ENCODE measurements at regions of chr11 and their contacts with region 1.

Region 1: GRCh38 chr11:66842501-66842895 is 743 bp upstream of the RCE1 start:
- DNase-seq: no peak
- ATAC-seq: no peak; the same call in 1 of the 2 replicates
- H3K4me3 ChIP-seq: peak overlapping the region; percentile 82 to 99
- H3K27ac ChIP-seq: peak overlapping the region; percentile 95
- H3K4me1 ChIP-seq: peaks cover 35% of the 10 kb centered on the region
- H3K27me3 ChIP-seq: no peaks in the 10 kb centered on the region
- CTCF ChIP-seq: no peak

Region 2: DNA sequence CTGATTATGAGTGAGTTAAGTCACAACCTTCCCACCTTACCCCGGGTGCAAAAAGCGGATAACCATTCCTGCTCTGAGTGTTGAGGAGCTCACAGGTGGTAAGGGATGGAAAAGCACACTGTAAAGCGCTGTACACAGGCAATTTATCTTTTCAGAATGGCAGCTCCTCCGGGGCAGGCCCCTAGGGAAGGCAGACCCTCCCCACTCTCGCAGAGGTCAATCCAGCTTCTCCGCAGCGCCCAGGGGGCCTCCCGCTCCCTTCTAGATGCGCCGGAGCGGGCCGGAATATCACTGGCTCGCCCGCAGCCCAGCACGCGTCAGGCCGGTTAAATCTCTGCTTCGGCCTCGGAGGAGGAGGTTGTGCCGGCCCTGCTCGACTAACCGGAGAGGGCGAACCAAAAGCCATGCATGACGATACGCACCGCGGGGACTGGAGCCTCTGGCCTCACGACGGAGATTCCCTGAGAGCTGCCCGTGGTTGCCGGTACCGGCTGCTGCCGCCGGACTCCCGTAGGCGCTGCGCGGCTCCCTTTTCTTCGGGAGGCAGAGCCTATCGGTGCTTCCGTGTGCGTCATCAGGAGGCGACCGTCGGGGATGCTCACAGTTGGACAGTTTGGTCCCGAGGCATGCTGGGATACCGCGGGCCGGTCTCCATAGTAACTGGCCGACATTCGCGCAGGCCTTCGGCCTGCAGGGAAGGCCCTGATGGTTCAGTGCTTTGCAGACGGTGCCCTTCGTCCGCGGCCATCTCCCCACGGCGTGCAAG is 497.8 kb before region 1 on chr11 and contains the start of gene BRMS1:
- CTCF ChIA-PET with region 1: no interaction called
- POLR2A ChIA-PET with region 1: no interaction called
- in situ Hi-C with region 1: no loop called
- intact Hi-C with region 1: no loop called
- DNase-seq: peak; percentile 91
- ATAC-seq: peak; percentile 86
- H3K4me3 ChIP-seq: peak within 1 kb of the TSS; percentile 91 to 98
- H3K27ac ChIP-seq: peak within 1 kb of the TSS; percentile 94
- H3K4me1 ChIP-seq: peaks cover 24% of the 10 kb centered on the region
- H3K27me3 ChIP-seq: no peaks in the 10 kb centered on the region
- CTCF ChIP-seq: no peak
- total RNA-seq, gene BRMS1: 80.5 TPM

Region 3: DNA sequence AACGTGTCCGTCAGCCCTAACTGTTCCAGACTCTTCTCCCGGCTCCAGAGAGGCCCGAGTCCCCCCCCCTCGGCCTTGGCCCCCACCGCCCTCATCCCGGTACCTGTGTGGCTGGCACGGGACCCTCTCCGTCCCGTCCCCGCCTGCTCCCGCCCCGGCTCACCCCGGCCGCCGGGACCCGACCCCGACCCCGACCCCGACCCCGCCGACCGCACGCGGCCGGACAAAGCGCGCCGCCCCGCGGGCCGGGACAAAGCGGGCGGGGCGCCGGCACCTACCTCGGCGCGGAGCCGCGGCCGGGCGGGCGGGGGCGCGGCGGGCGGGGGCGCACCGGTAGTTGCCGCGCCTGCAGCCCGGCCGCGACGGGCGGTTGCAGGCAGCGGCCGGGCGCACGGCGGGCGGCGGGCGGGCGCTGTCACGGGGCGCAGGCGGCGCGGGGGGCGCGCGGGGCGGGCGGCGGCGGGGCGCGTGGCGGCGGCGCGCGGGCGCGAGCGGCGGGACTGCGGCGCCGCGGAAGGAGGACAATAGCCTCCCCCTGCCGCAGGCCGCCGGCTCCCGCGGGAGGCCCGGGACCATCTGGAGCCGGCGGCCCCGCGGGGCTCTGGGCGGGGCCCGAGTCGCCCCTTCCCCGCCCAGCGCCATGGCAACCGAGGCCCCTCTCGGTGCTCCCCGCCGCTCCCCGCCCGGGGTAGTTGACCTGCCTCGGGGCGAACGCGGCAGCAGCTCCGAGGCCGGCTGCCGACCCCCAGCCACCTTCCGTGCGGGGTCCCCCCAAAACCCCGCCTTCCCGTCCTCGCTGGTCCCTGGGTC is 114.4 kb before region 1 on chr11:
- CTCF ChIA-PET with region 1: no interaction called
- POLR2A ChIA-PET with region 1: interaction called, 10 read pairs
- in situ Hi-C with region 1: no loop called
- intact Hi-C with region 1: no loop called
- DNase-seq: no peak
- ATAC-seq: peak; percentile 58
- H3K4me3 ChIP-seq: peak overlapping the region; percentile 44 to 53
- H3K27ac ChIP-seq: no peak overlapping the region
- H3K4me1 ChIP-seq: peaks cover 6% of the 10 kb centered on the region; the same call in 1 of the 2 replicates
- H3K27me3 ChIP-seq: peaks cover 35% of the 10 kb centered on the region
- CTCF ChIP-seq: no peak

Region 4: DNA sequence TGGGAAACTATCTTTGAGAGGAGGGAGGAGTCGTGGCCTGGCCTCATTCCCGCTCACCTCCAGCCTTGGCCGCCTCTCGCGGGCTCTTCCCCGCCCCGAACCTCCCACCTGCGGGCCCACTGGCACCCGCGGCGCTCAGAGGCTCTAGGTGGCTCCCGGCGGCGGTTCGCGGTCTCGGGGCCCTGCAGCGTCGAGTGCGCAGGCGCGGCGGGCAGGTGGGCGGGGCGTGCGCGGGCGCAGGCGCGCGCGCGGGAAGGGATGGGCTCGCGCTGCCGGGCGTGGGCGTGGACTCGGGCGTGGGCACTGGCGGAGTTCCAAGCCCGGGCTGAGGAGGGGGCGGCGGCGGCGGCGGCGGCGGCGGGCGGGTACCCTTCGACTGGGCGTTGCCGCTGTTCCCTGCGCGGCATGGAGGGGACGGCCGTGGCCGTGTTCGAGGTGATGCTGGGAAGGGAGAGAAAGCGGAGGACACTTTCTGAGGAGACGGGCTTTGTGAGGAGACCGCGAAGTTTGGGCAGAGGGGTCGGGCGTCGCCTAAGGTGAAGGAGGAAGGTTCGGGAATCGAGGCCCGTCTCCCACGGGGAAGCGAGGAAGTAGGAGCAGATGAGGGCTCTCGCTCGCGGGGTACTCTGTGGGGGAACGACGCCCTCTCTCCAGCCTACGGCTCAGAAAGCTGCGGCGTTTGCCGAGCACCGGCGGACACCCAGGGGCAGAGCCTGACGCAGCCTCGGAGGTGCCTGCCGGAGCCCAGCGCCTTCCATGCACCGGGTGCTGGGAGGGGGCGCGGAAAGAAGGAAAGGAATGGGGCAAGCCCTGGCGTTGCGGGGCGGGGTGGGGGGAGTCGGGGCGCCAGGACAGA is 97.8 kb before region 1 on chr11:
- CTCF ChIA-PET with region 1: no interaction called
- POLR2A ChIA-PET with region 1: no interaction called
- in situ Hi-C with region 1: no loop called
- intact Hi-C with region 1: no loop called
- DNase-seq: no peak
- ATAC-seq: peak; percentile 89
- H3K4me3 ChIP-seq: peak overlapping the region; percentile 85 to 87
- H3K27ac ChIP-seq: peak overlapping the region; percentile 90
- H3K4me1 ChIP-seq: peaks cover 4% of the 10 kb centered on the region
- H3K27me3 ChIP-seq: no peaks in the 10 kb centered on the region
- CTCF ChIP-seq: no peak

Region 5: GRCh38 chr11:66823700-66824099 is 18.8 kb before region 1 on chr11:
- CTCF ChIA-PET with region 1: no interaction called
- POLR2A ChIA-PET with region 1: interaction called, 14 read pairs
- in situ Hi-C with region 1: no loop called
- intact Hi-C with region 1: no loop called
- DNase-seq: no peak
- ATAC-seq: no peak
- H3K4me3 ChIP-seq: no peak overlapping the region
- H3K27ac ChIP-seq: no peak overlapping the region
- H3K4me1 ChIP-seq: no peaks in the 10 kb centered on the region
- H3K27me3 ChIP-seq: no peaks in the 10 kb centered on the region
- CTCF ChIP-seq: no peak

Region 6: GRCh38 chr11:66889974-66890373 is 47.5 kb after region 1 on chr11:
- CTCF ChIA-PET with region 1: no interaction called
- POLR2A ChIA-PET with region 1: interaction called, 10 read pairs
- in situ Hi-C with region 1: no loop called
- intact Hi-C with region 1: no loop called
- DNase-seq: no peak
- ATAC-seq: no peak
- H3K4me3 ChIP-seq: no peak overlapping the region
- H3K27ac ChIP-seq: no peak overlapping the region
- H3K4me1 ChIP-seq: peaks cover 13% of the 10 kb centered on the region
- H3K27me3 ChIP-seq: no peaks in the 10 kb centered on the region
- CTCF ChIP-seq: no peak